Activated CD4-positive, alpha-beta T cell treated with anti-CD3 and anti-CD28 coated beads, Interleukin-2, amount 10 ng/mL, durations not matched to agents 24 days and 14 days (primary cell): ENCODE measurements at regions of chr3 and their contacts with region 1.

Region 1: DNA sequence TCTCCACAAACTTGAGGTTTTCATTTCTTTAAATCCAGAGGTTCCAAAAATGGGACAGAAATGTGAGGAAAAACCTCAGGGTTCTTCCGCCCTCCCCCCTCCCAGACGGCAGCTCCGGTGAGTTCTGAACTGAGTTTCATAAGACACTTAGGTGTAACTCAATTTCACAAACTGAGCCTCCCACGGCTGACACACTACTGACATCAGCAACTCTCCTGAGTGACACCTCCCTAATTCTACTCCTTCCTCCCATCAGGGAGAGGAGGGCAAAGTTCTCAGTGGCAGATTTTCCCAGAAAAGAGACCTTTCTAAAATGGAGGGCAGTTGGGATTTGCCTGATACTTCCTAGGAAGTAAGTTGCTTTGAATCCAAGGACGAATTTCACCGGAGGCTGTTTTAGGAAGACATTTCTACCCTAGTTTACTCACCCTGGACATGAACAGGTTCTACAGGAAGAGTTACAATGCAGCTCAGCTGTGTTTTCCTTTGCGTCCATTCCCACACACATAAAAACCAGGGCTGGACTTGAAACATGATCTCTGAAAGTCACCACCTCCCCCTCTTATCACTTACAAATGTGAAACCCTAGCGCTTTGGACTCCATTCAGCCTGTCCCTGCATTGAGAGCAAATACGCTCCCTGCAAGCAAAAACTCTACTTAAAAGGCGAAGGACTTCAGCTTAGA is 78.1 kb upstream of the LMOD3 start:
- DNase-seq: peak; percentile 83
- H3K4me3 Mint-ChIP-seq: peak overlapping the region; percentile 90
- H3K27ac Mint-ChIP-seq: peak overlapping the region; percentile 99
- H3K4me1 Mint-ChIP-seq: peaks cover 59% of the 10 kb centered on the region
- H3K27me3 Mint-ChIP-seq: no peaks in the 10 kb centered on the region

Region 2: GRCh38 chr3:69033470-69033869 is 167.1 kb before region 1 on chr3:
- intact Hi-C with region 1: loop called (anchors 10 kb)
- DNase-seq: no peak
- H3K4me3 Mint-ChIP-seq: no peak overlapping the region
- H3K27ac Mint-ChIP-seq: peak overlapping the region; percentile 82
- H3K4me1 Mint-ChIP-seq: peaks cover 20% of the 10 kb centered on the region
- H3K27me3 Mint-ChIP-seq: no peaks in the 10 kb centered on the region

Region 3: DNA sequence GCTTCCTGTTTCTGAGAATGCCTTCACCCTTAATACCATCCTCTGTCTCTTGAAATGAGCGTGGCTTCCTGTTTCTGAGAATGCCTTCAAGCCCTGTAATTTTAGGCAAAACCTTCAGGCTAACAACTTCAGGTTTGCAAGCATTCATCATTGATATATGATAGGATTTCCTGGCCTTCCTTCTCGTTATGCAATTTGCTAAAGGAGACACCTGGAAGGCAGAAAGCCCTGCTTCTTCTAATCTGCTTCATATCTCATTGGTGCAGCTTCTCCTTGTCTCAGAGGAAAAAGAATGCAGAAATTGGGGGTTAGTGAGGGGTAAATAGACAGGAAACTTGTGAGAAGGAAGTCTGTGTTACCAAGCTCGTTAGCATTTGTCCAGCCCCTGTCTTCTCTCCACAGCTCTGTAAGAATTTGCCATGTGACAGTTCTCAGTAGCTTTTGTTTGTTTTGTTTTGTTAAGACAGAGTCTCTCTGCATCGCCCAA is 108.5 kb before region 1 on chr3:
- intact Hi-C with region 1: loop called (anchors 1 kb)
- DNase-seq: peak; percentile 81
- H3K4me3 Mint-ChIP-seq: peak overlapping the region; percentile 89
- H3K27ac Mint-ChIP-seq: peak overlapping the region; percentile 97
- H3K4me1 Mint-ChIP-seq: peaks cover 76% of the 10 kb centered on the region
- H3K27me3 Mint-ChIP-seq: no peaks in the 10 kb centered on the region

Region 4: DNA sequence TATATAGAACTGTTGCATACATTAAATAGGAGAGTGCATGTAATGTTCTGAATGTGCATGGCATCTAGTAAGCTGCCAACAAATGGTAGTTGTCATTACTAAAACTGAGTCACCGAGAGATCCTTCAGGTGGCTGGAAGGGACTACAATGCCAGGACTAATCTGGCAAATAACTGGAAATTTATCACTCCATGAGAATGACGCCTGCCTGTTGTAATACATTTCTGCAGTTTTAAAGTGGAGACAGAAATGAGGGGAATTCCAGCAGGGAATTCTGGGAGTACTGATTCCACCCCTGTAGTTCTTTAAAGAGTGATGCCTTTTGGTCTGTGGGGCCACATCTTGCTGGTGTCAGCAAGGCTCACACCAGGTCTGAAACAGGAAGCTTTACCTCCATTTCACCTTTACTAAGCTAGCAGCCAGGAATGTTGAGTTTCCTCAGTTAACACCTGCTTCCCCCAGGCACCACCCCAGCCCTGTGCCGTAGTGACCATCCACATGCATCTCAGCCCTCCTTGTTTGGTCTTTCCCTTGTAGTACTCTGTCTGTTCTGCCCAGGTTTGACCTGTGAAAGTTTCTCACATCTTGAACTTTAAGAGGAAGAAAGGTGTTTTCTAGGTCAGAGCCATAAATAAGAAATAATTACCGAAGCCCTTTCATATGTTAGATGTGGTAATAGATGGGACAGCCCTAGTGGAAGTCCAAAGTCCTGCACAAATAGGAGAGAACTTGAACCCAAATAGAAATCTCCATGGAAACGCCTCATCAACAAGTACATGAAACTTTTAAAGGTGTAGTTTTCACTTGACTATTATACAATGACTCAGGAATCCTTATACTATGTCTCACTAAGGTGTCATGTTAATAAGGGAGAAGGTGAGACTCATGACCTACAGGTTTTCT is 21.4 kb before region 1 on chr3:
- intact Hi-C with region 1: loop called (anchors 2 kb)
- DNase-seq: no peak
- H3K4me3 Mint-ChIP-seq: no peak overlapping the region
- H3K27ac Mint-ChIP-seq: peak overlapping the region; percentile 47
- H3K4me1 Mint-ChIP-seq: peaks cover 21% of the 10 kb centered on the region
- H3K27me3 Mint-ChIP-seq: no peaks in the 10 kb centered on the region

Region 5: GRCh38 chr3:69240651-69241568 is 40.4 kb after region 1 on chr3:
- intact Hi-C with region 1: loop called (anchors 2 kb)
- DNase-seq: no peak
- H3K4me3 Mint-ChIP-seq: no peak overlapping the region
- H3K27ac Mint-ChIP-seq: no peak overlapping the region
- H3K4me1 Mint-ChIP-seq: peaks cover 16% of the 10 kb centered on the region
- H3K27me3 Mint-ChIP-seq: no peaks in the 10 kb centered on the region

Region 6: GRCh38 chr3:69439643-69440270 is 239.2 kb after region 1 on chr3:
- intact Hi-C with region 1: loop called (anchors 2 kb)
- DNase-seq: no peak
- H3K4me3 Mint-ChIP-seq: peak overlapping the region; percentile 13
- H3K27ac Mint-ChIP-seq: peak overlapping the region; percentile 4
- H3K4me1 Mint-ChIP-seq: peaks cover 35% of the 10 kb centered on the region
- H3K27me3 Mint-ChIP-seq: no peaks in the 10 kb centered on the region

Region 7: DNA sequence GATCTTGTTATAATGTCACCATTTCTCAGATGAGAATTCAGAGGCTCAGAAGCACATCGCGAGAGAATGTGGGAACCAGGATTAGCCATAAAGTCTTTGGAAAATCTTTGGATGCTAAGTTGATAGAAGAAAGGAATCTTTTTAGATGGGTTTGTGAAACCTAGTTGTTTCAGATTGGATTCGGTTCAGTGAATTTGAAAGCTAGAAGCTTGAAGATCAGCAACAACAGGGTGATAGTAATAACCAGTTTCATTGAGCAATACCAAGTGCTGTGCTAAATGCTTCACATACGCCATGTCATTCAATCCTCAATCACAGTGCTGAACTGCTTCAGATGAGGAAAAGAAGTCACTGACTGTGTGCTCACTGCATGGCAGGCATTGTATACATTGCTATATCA is 491.3 kb after region 1 on chr3:
- intact Hi-C with region 1: no loop called
- DNase-seq: no peak
- H3K4me3 Mint-ChIP-seq: no peak overlapping the region
- H3K27ac Mint-ChIP-seq: no peak overlapping the region
- H3K4me1 Mint-ChIP-seq: no peaks in the 10 kb centered on the region
- H3K27me3 Mint-ChIP-seq: no peaks in the 10 kb centered on the region